A673 (cell line): ENCODE measurements at regions of chr15 and their contacts with region 1.

Region 1: DNA sequence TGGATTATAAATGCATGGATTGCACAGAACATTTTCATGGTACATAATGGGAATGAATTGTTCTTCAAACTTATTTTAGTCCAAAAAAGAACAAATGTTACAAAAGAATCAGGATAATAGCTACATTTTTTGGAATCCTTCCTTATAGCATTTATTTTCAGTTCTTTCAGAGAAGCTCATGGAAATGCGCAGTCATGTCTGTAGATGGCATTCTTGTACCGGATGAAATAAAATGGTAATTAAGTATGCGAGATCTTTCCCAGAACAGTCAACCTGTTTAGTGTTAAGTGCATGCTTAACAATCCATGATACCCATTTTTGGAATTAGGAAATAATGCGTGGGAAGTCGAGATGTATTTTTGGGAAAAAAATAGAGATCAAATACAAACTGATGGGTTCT is 38.2 kb upstream of the GOLGA8B start:
- DNase-seq: peak; percentile 66
- H3K4me3 ChIP-seq: no peak overlapping the region
- H3K27ac ChIP-seq: no peak overlapping the region
- H3K4me1 ChIP-seq: peaks cover 20% of the 10 kb centered on the region
- H3K27me3 ChIP-seq: no peaks in the 10 kb centered on the region
- CTCF ChIP-seq: peak; percentile 73

Region 2: GRCh38 chr15:34318277-34319079 is 303.2 kb before region 1 on chr15:
- CTCF ChIA-PET with region 1: no interaction called
- POLR2A ChIA-PET with region 1: no interaction called
- intact Hi-C with region 1: no loop called
- DNase-seq: peak; percentile 79
- H3K4me3 ChIP-seq: peak overlapping the region; percentile 50
- H3K27ac ChIP-seq: peak overlapping the region; percentile 51
- H3K4me1 ChIP-seq: peaks cover 6% of the 10 kb centered on the region
- H3K27me3 ChIP-seq: no peaks in the 10 kb centered on the region
- CTCF ChIP-seq: no peak

Region 3: GRCh38 chr15:34708422-34708821 is 86.7 kb after region 1 on chr15:
- CTCF ChIA-PET with region 1: interaction called, 10 read pairs
- POLR2A ChIA-PET with region 1: no interaction called
- intact Hi-C with region 1: no loop called
- DNase-seq: peak; percentile 52
- H3K4me3 ChIP-seq: no peak overlapping the region
- H3K27ac ChIP-seq: no peak overlapping the region
- H3K4me1 ChIP-seq: no peaks in the 10 kb centered on the region
- H3K27me3 ChIP-seq: peaks cover 75% of the 10 kb centered on the region
- CTCF ChIP-seq: peak; percentile 91